Endothelial cell of umbilical vein (primary cell): ENCODE measurements at regions of chr11 and their contacts with region 1.

Region 1: DNA sequence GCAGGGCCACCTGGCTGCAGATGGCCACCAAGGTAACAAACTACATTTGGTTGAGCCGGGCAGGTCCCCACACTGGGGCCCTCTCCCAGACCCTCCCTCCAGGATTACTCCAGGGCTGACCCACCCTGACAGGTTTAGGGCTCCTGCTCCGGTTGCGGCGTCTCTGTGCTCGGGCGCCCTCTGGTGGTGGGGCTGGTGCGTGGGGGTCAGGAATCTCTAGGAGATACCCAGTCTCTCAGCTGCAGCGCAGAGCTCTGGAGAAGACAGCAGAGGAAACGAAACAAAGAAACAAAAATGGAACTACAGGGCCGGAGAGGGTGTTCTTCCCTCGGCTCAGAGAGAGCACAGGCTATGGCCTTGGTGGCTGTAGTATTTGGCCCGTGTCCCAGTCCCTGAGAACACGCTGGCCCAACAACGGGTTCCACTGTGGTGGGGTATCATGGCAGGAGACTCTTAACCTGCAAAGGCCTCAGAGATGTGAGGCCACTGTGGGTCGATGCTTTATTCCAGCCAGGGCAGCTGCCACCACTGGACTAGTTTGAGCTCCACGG is 2.4 kb downstream of the C11orf96 start:
- DNase-seq: peak; percentile 51
- H3K4me3 ChIP-seq: no peak overlapping the region
- H3K27ac ChIP-seq: no peak overlapping the region
- H3K4me1 ChIP-seq: peaks cover 13% of the 10 kb centered on the region
- H3K27me3 ChIP-seq: peaks cover 15 to 32% of the 10 kb centered on the region in 2 experiments
- CTCF ChIP-seq: peak; percentile 82 to 87
- POLR2A ChIP-seq: no peak

Region 2: GRCh38 chr11:43895601-43896000 is 49.2 kb before region 1 on chr11:
- CTCF ChIA-PET with region 1: interaction called, 352 read pairs
- POLR2A ChIA-PET with region 1: interaction called, 4 read pairs
- dilution Hi-C with region 1: no loop called
- intact Hi-C with region 1: loop called (anchors 1 kb)
- DNase-seq: no peak
- H3K4me3 ChIP-seq: no peak overlapping the region
- H3K27ac ChIP-seq: no peak overlapping the region
- H3K4me1 ChIP-seq: peaks cover 15% of the 10 kb centered on the region
- H3K27me3 ChIP-seq: no peaks in the 10 kb centered on the region
- CTCF ChIP-seq: no peak
- POLR2A ChIP-seq: no peak

Region 3: GRCh38 chr11:43920598-43921419 is 24.0 kb before region 1 on chr11:
- CTCF ChIA-PET with region 1: interaction called, 43 read pairs
- POLR2A ChIA-PET with region 1: interaction called, 8 read pairs
- dilution Hi-C with region 1: no loop called
- intact Hi-C with region 1: loop called (anchors 2 kb)
- DNase-seq: peak; percentile 96
- H3K4me3 ChIP-seq: no peak overlapping the region
- H3K27ac ChIP-seq: peak overlapping the region; percentile 75
- H3K4me1 ChIP-seq: peaks cover 39% of the 10 kb centered on the region
- H3K27me3 ChIP-seq: no peaks in the 10 kb centered on the region
- CTCF ChIP-seq: no peak
- POLR2A ChIP-seq: no peak

Region 4: DNA sequence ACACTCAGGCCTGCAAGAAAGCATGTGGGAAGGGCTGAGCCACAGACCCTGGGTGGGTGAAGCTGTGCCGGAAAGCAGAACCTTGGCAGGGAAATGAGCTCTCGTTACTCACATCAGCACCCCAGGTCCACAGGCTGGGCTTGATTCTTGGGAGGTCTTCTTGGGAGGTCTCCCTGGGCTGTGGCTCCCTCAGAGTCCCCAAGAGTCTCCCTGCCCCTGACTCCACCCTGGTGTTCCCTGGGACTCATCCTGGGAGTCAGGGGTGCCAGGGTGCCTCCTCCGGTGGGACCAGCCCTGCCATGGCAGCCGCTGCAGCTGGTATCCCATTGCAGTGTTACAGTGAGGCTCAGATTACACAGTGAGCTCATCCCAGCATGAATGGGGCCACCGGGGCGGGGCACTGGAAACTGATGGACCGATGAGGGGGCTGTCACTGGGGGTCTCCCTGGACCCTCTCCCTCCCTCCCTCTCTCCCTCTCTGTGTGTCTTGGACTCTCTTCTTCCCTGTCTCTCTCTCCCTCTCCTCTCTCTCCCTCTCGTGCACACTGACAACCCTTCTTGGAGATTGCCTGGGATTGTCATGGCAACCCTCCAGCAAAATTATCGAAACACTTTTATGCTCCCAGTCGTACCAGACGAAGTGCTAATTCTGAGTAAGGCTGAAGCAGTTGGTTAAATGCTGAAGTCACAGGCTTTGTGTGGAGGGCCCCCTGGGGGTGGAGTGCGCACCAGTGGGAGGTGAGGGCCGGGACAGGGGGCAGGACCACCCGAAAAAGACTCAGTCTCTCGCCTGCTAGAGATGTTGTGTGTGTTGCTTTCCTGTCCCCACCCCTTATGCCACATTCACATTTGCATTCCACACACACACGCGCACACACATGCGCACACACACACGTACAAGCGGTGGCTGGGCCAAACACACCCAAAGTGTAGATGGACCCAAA is 11.0 kb before region 1 on chr11:
- CTCF ChIA-PET with region 1: interaction called, 43 read pairs
- POLR2A ChIA-PET with region 1: interaction called, 3 read pairs
- dilution Hi-C with region 1: no loop called
- intact Hi-C with region 1: no loop called
- DNase-seq: no peak
- H3K4me3 ChIP-seq: no peak overlapping the region
- H3K27ac ChIP-seq: no peak overlapping the region
- H3K4me1 ChIP-seq: peaks cover 28% of the 10 kb centered on the region
- H3K27me3 ChIP-seq: no peaks in the 10 kb centered on the region
- CTCF ChIP-seq: no peak
- POLR2A ChIP-seq: no peak

Region 5: DNA sequence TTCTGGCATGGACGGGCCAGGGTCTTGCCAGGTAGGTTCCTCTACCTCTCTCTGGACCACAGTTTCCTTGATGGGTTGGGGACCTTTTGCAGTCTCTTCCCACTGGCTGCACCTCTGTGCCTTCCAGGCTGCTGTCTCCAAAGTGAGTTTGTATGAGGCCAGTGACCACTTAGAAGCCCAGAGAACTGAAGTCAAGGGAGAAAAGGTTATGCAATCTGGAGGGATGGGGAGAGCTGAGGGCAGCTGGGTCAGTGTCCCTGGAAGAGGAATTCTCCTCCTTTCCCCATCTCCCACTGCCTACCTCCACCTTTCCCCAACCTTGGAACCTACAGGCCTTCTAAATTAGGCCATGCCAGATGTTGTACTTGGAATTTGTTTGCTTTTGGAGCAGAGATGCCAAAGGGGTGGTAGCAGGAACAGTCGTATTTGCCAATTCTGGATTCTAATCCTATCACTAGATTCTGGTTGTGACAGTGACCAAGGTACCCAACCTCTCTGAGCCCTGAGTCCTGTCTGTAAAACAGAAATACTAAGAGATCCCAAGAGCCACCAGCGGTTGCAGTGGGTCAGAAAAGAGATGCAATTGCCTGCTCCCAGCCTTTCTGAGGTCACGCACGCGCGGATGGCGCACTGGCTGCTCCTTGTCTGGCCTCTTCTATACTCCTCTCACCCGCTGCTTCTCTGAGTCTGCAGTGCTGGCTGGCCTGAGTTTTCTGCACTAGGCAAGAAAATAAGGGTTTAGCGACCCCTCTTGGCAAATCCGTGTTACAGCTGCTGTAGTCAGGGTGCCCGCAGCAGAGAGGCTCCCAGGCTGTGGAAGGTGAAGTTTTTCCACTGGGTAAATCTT is 92.2 kb after region 1 on chr11:
- CTCF ChIA-PET with region 1: interaction called, 5 read pairs
- POLR2A ChIA-PET with region 1: no interaction called
- dilution Hi-C with region 1: no loop called
- intact Hi-C with region 1: loop called (anchors 1 kb)
- DNase-seq: peak; percentile 65
- H3K4me3 ChIP-seq: no peak overlapping the region
- H3K27ac ChIP-seq: no peak overlapping the region
- H3K4me1 ChIP-seq: no peaks in the 10 kb centered on the region
- H3K27me3 ChIP-seq: peaks cover 3 to 6% of the 10 kb centered on the region in 2 experiments
- CTCF ChIP-seq: peak; percentile 75 to 82
- POLR2A ChIP-seq: no peak

Region 6: DNA sequence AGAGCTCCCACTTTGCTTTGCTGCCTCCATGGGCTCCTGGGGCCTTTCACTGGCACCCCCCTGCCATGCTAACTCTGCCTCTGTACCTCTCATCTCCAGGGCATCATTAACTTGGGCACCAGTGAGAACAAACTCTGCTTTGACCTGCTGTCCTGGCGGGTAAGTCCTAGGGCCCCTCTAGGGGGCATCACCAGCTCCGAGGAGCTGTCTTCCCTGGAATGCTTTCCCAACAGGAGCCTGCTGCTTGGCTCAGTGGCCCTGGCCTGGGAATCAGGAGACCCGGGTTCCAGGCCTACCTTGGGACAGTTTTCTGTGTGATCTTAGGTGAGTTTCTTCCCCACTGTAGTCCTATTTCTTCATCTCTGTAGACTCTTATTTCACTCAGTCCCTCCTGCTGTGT is 126.3 kb after region 1 on chr11:
- CTCF ChIA-PET with region 1: no interaction called
- POLR2A ChIA-PET with region 1: no interaction called
- dilution Hi-C with region 1: no loop called
- intact Hi-C with region 1: no loop called
- DNase-seq: no peak
- H3K4me3 ChIP-seq: no peak overlapping the region
- H3K27ac ChIP-seq: no peak overlapping the region
- H3K4me1 ChIP-seq: peaks cover 5% of the 10 kb centered on the region
- H3K27me3 ChIP-seq: no peaks in the 10 kb centered on the region
- CTCF ChIP-seq: no peak
- POLR2A ChIP-seq: no peak